Spleen (tissue), 13 donors: ENCODE measurements at regions of chr9 and their contacts with region 1.

Region 1: DNA sequence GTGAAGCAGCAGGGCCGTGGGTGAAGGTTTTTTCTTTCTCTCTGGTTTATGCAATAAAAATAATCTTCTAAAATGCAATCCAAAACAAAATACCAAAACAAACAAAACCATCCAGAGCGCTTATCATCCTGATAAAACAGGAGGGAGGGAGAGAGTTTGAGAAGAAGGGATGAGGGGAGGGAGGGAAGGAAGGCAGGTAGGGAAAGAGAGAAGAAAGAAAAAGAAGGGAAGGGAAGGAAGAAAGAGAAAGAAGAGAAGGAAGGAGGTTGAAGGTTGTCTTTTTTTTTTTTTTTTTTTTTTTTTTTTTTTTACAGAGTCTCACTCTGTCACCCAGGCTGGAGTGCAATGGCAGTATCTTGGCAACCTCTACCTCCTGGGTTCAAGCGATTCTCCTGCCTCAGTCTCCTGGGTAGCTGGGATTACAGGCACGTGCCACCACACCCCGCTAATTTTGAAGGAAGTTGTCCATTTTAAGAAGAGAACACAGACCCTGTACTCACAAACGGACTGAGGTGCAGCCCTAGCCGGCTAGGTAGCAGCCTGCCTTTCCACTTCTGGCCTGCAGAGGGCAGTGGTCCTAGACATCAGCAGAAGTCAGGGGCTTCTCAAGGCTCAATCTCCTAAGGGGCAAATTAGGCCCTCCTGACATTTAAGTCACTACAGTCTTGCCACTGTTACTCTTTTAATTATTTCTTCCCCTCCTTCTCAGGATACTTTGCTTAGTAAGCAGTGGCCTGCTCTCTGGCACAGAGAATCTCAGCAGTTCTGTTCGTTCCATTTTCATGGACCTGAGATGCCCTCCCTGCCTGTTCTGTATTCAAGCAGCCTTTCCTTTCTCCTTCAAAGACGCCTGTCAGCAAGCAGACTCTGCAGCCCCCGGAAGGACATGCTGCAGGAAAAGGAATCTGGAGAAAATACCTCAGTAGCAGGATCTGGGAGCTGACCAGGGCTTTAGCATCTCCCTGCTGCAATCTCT is 76.4 kb downstream of the EPB41L4B start:
- DNase-seq: peak; percentile 87
- H3K4me3 ChIP-seq: no peak overlapping the region
- H3K27ac ChIP-seq: no peak overlapping the region
- H3K4me1 ChIP-seq: no peaks in the 10 kb centered on the region
- H3K27me3 ChIP-seq: peaks cover 0 to 27% (median 4%) of the 10 kb centered on the region in 7 donors
- CTCF ChIP-seq: peak; percentile 57 to 93 (median 83)
- POLR2A ChIP-seq: no peak

Region 2: GRCh38 chr9:109469646-109470358 is 225.4 kb after region 1 on chr9:
- intact Hi-C with region 1: loop called (anchors 5 kb)
- DNase-seq: no peak
- H3K4me3 ChIP-seq: no peak overlapping the region
- H3K27ac ChIP-seq: no peak overlapping the region
- H3K4me1 ChIP-seq: no peaks in the 10 kb centered on the region
- H3K27me3 ChIP-seq: peaks cover 0 to 57% (median 0%) of the 10 kb centered on the region in 7 donors
- CTCF ChIP-seq: peak; percentile 29 to 92 (median 79)
- POLR2A ChIP-seq: no peak